Heart left ventricle (tissue), 16 donors: ENCODE measurements at regions of chr17 and their contacts with region 1.

Region 1: GRCh38 chr17:72743037-72743467 is 349.4 kb downstream of the SLC39A11 start:
- DNase-seq: no peak
- ATAC-seq: no peak
- H3K4me3 ChIP-seq: no peak overlapping the region
- H3K27ac ChIP-seq: no peak overlapping the region
- H3K4me1 ChIP-seq: peaks cover 0 to 8% (median 0%) of the 10 kb centered on the region in 12 donors
- H3K27me3 ChIP-seq: no peaks in the 10 kb centered on the region
- CTCF ChIP-seq: no peak
- POLR2A ChIP-seq: no peak

Region 2: GRCh38 chr17:72754513-72754912 is 11.5 kb after region 1 on chr17:
- intact Hi-C with region 1: no loop called
- DNase-seq: no peak
- ATAC-seq: no peak
- H3K4me3 ChIP-seq: no peak overlapping the region
- H3K27ac ChIP-seq: no peak overlapping the region
- H3K4me1 ChIP-seq: no peaks in the 10 kb centered on the region
- H3K27me3 ChIP-seq: no peaks in the 10 kb centered on the region
- CTCF ChIP-seq: no peak
- POLR2A ChIP-seq: no peak

Region 3: GRCh38 chr17:73387746-73388577 is 644.9 kb after region 1 on chr17:
- intact Hi-C with region 1: loop called in 1 of 10 experiments (anchors 10 kb)
- DNase-seq: peak in 1 of 5 donors; percentile 24
- ATAC-seq: no peak
- H3K4me3 ChIP-seq: no peak overlapping the region
- H3K27ac ChIP-seq: no peak overlapping the region
- H3K4me1 ChIP-seq: no peaks in the 10 kb centered on the region
- H3K27me3 ChIP-seq: no peaks in the 10 kb centered on the region
- CTCF ChIP-seq: no peak
- POLR2A ChIP-seq: no peak